ENCODE measurements at regions of chr5 and their contacts with region 1.

Region 1: GRCh38 chr5:26802944-26803343 is 235.4 kb downstream of the CDH9 start:
- DNase-seq: no peak
- ATAC-seq: no peak
- H3K4me3 ChIP-seq: no peak overlapping the region
- H3K27ac ChIP-seq: no peak overlapping the region
- H3K4me1 ChIP-seq: no peaks in the 10 kb centered on the region
- H3K27me3 ChIP-seq: no peaks in the 10 kb centered on the region
- CTCF ChIP-seq: no peak
- EP300 ChIP-seq: no peak
- POLR2A ChIP-seq: no peak
- RAD21 ChIP-seq: no peak

Region 2: GRCh38 chr5:26791433-26791832 is 11.5 kb before region 1 on chr5:
- CTCF ChIA-PET with region 1: no interaction called
- POLR2A ChIA-PET with region 1: no interaction called
- RAD21 ChIA-PET with region 1: no interaction called
- SMC1A ChIA-PET with region 1: no interaction called
- in situ Hi-C with region 1: no loop called
- intact Hi-C with region 1: loop called (anchors 1 kb)
- DNase-seq: no peak
- ATAC-seq: no peak
- H3K4me3 ChIP-seq: no peak overlapping the region
- H3K27ac ChIP-seq: no peak overlapping the region
- H3K4me1 ChIP-seq: no peaks in the 10 kb centered on the region
- H3K27me3 ChIP-seq: no peaks in the 10 kb centered on the region
- CTCF ChIP-seq: no peak
- EP300 ChIP-seq: no peak
- POLR2A ChIP-seq: no peak
- RAD21 ChIP-seq: no peak

Region 3: DNA sequence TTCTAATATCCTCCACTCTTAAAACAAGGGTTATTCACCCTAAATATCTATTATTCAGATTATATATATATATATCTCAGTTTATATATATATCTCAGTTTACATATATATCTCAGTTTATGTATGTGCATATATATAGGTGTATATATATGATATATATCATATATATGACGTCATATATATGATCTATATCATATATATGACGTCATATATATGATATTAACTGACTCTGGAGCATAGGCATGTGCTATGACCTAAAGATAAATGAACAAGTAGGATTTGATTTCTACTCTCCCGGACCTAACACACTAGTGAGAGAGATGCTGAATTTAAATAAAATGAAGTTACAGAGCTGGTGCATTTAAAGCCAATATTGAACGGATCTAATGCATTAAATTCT is 61.1 kb after region 1 on chr5:
- CTCF ChIA-PET with region 1: no interaction called
- POLR2A ChIA-PET with region 1: no interaction called
- RAD21 ChIA-PET with region 1: no interaction called
- SMC1A ChIA-PET with region 1: no interaction called
- in situ Hi-C with region 1: no loop called
- intact Hi-C with region 1: no loop called
- DNase-seq: no peak
- ATAC-seq: no peak
- H3K4me3 ChIP-seq: no peak overlapping the region
- H3K27ac ChIP-seq: no peak overlapping the region
- H3K4me1 ChIP-seq: no peaks in the 10 kb centered on the region
- H3K27me3 ChIP-seq: no peaks in the 10 kb centered on the region
- CTCF ChIP-seq: no peak
- EP300 ChIP-seq: no peak
- POLR2A ChIP-seq: no peak
- RAD21 ChIP-seq: no peak

Measured in GM12878 (cell line).